A549 (cell line): ENCODE measurements at regions of chr15 and their contacts with region 1.

Region 1: GRCh38 chr15:65275728-65276126 is 11.0 kb downstream of the PARP16 start:
- DNase-seq: peak; percentile 74
- ATAC-seq: peak; percentile 75 to 78
- H3K4me3 ChIP-seq: no peak overlapping the region
- H3K27ac ChIP-seq: peak overlapping the region; percentile 59 to 76
- H3K4me1 ChIP-seq: peaks cover 20% of the 10 kb centered on the region
- CTCF ChIP-seq: no peak
- EP300 ChIP-seq: no peak
- POLR2A ChIP-seq: no peak
- RAD21 ChIP-seq: no peak

Region 2: DNA sequence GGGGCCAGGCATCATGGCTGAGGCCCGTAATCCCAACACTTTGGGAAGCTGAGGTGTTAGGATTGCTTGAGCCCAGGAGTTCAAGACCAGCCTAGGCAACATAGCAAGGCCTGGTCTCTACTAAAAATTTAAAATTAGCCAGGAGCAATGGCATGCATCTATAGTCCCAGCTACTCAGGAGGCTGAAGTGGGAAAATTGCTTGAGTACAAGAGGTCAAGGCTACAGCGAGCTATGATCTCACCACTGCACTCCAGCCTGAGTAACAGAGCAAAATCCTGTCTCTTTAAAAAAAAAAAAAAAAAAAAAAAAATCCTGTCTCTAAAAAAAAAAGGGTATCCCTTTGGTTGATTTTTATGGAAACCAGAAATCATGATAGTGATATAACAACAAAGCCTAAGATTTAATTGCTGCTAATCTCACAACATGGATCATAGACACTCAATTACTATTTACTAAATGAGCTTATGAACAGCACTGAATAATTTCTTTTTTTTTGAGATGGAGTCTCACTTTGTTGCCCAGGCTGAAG is 906.6 kb before region 1 on chr15:
- CTCF ChIA-PET with region 1: no interaction called
- POLR2A ChIA-PET with region 1: no interaction called
- DNase-seq: no peak
- ATAC-seq: no peak; a peak in 1 of 6 replicates
- H3K4me3 ChIP-seq: no peak overlapping the region
- H3K27ac ChIP-seq: no peak overlapping the region
- H3K4me1 ChIP-seq: no peaks in the 10 kb centered on the region
- CTCF ChIP-seq: no peak
- EP300 ChIP-seq: no peak
- POLR2A ChIP-seq: no peak
- RAD21 ChIP-seq: no peak

Region 3: DNA sequence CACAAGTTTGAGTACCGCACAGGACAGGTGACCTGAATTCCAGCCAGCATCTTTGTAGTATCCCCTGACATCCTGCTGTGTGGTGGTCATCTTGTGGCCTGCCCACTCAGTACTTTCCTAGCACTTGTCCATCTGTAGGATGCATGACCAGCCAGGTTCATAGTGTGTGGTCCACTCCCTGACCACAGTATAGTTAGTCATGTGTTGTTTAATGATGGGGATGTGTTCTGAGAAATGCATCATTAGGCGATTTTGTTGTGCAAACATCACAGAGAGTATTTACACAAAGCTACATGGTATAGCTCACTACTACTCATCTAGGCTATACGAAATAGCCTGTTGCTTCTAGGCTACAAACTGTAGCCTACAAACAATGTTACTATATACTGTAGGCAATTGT is 483.4 kb before region 1 on chr15:
- CTCF ChIA-PET with region 1: no interaction called
- POLR2A ChIA-PET with region 1: no interaction called
- DNase-seq: peak in 1 of 2 experiments; percentile 26
- ATAC-seq: peak; percentile 62 to 70; a peak in 5 of 6 replicates
- H3K4me3 ChIP-seq: no peak overlapping the region
- H3K27ac ChIP-seq: no peak overlapping the region
- H3K4me1 ChIP-seq: 0 out of 3 replicates have a peak, but pooled peaks cover 2% of the 10 kb centered on the region
- CTCF ChIP-seq: no peak
- EP300 ChIP-seq: no peak
- POLR2A ChIP-seq: no peak
- RAD21 ChIP-seq: no peak

Region 4: DNA sequence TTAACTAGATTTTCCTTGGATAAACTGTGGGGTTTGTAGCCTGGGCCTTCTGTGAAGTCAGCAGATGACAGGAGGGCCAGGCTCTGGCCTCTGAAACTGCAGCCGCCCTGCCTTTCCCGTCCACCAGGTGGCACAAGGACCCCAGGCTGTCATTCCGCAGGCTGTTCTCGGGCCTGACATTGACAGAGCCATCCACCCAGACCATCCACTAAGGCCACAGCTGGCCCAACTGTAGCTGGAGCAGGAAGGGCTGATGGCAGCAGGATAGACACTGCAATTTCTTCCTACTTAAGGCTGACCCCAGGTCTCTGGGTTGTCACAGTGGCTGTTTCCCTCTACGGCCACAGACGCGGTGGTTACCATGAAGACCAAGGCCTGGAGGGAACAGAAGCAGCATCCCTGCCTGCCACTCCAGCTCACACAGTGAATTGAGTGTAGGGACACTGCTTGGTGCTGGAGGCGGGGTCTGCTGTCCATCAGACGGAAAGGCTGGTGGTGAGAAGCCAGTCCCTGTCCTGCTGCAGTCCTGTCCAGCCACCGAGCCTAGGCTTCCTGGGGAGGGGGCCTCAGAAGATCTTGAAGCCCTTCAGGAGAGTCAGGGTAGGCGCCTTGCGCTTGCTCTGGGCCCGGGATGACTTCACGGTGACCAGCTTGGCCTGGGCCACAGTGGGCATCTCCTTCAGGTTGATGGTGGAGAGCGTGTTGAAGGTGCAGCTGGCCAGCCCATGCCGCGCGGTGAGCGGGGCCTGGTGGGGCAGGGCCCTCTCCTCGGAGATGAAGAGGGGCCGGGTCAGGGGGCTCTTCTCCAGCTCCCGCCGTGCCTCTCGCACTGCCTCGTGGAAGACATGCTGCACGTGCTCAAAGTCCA is 221.2 kb before region 1 on chr15:
- CTCF ChIA-PET with region 1: interaction called, 11 read pairs
- POLR2A ChIA-PET with region 1: no interaction called
- DNase-seq: peak; percentile 79 to 93
- ATAC-seq: peak; percentile 83 to 91
- H3K4me3 ChIP-seq: no peak overlapping the region
- H3K27ac ChIP-seq: peak overlapping the region; percentile 43 to 75
- H3K4me1 ChIP-seq: peaks cover 51% of the 10 kb centered on the region
- CTCF ChIP-seq: peak; percentile 94
- EP300 ChIP-seq: no peak
- POLR2A ChIP-seq: no peak
- RAD21 ChIP-seq: peak; percentile 95 to 98

Region 5: DNA sequence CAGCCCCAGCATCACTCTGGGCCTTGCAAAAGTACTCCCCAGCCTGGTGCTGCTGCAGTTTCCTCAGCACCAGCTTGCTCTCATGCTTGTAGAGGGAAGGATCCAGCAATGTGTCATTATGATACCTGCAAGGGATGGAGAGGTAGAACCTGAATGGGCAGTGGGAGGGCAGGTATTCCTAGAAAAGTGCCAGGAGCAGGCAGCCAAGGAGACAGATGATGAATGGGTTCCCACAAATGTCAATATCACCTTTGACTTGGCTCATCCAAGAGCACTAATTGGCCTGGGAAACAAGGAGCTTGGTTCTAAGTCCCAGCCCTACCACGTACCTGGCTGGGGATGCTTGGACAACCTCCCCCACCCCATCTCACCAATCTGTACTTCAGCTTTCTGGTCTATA is 73.8 kb before region 1 on chr15:
- CTCF ChIA-PET with region 1: interaction called, 408 read pairs
- POLR2A ChIA-PET with region 1: no interaction called
- DNase-seq: no peak
- ATAC-seq: no peak
- H3K4me3 ChIP-seq: no peak overlapping the region
- H3K27ac ChIP-seq: no peak overlapping the region
- H3K4me1 ChIP-seq: no peaks in the 10 kb centered on the region
- CTCF ChIP-seq: no peak
- EP300 ChIP-seq: no peak
- POLR2A ChIP-seq: no peak
- RAD21 ChIP-seq: no peak

Region 6: GRCh38 chr15:65217526-65218482 is 57.9 kb before region 1 on chr15:
- CTCF ChIA-PET with region 1: interaction called, 42 read pairs
- POLR2A ChIA-PET with region 1: no interaction called
- DNase-seq: no peak
- ATAC-seq: peak; percentile 5 to 27; a peak in 4 of 6 replicates
- H3K4me3 ChIP-seq: no peak overlapping the region
- H3K27ac ChIP-seq: no peak overlapping the region
- H3K4me1 ChIP-seq: 0 out of 3 replicates have a peak, but pooled peaks cover under 1% of the 10 kb centered on the region
- CTCF ChIP-seq: no peak
- EP300 ChIP-seq: no peak
- POLR2A ChIP-seq: no peak
- RAD21 ChIP-seq: no peak

Region 7: GRCh38 chr15:65245096-65245856 is 30.5 kb before region 1 on chr15:
- CTCF ChIA-PET with region 1: interaction called, 33 read pairs
- POLR2A ChIA-PET with region 1: no interaction called
- DNase-seq: no peak
- ATAC-seq: no peak
- H3K4me3 ChIP-seq: no peak overlapping the region
- H3K27ac ChIP-seq: no peak overlapping the region
- H3K4me1 ChIP-seq: peaks cover 3% of the 10 kb centered on the region; the same call in 1 of the 3 replicates
- CTCF ChIP-seq: no peak
- EP300 ChIP-seq: no peak
- POLR2A ChIP-seq: no peak
- RAD21 ChIP-seq: no peak

Region 8: DNA sequence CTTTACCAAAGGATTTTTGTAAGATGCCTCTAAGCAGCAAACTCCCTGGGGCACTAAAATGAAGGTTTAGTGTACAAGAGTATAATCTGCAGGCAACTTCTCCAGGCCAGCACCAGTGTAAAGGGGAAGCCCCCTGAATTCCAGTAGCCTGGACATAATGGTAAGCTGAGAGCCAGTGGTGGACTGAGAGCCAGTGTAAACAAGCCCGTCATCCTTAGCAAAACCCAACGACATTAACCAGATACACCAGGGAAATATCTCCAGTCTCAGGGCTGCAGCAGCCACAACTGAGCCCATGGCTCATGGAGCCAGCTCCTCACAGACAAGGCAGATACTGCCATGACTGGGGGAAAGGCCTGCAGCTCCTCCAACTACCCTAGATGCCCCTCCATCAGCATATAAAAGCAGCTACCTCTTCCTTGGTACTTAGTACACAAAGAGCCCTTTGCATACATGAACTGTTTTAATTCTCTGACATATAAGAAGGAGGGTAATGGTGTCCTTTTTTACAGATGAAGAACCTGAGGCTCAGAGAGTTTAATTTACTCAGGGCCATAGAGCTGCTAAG is 10.8 kb before region 1 on chr15:
- CTCF ChIA-PET with region 1: interaction called, 127 read pairs
- POLR2A ChIA-PET with region 1: no interaction called
- DNase-seq: no peak
- ATAC-seq: 0 out of 6 replicates have a peak, but pooled peaks of 1 of the 2 experiments have one; percentile 13
- H3K4me3 ChIP-seq: no peak overlapping the region
- H3K27ac ChIP-seq: no peak overlapping the region
- H3K4me1 ChIP-seq: no peaks in the 10 kb centered on the region
- CTCF ChIP-seq: no peak
- EP300 ChIP-seq: no peak
- POLR2A ChIP-seq: no peak
- RAD21 ChIP-seq: no peak

Region 9: GRCh38 chr15:65298731-65299130 is 23.0 kb after region 1 on chr15:
- CTCF ChIA-PET with region 1: interaction called, 25 read pairs
- POLR2A ChIA-PET with region 1: interaction called, 9 read pairs
- DNase-seq: no peak
- ATAC-seq: no peak
- H3K4me3 ChIP-seq: no peak overlapping the region
- H3K27ac ChIP-seq: no peak overlapping the region
- H3K4me1 ChIP-seq: peaks cover 23% of the 10 kb centered on the region
- CTCF ChIP-seq: no peak
- EP300 ChIP-seq: no peak
- POLR2A ChIP-seq: no peak
- RAD21 ChIP-seq: no peak

Region 10: DNA sequence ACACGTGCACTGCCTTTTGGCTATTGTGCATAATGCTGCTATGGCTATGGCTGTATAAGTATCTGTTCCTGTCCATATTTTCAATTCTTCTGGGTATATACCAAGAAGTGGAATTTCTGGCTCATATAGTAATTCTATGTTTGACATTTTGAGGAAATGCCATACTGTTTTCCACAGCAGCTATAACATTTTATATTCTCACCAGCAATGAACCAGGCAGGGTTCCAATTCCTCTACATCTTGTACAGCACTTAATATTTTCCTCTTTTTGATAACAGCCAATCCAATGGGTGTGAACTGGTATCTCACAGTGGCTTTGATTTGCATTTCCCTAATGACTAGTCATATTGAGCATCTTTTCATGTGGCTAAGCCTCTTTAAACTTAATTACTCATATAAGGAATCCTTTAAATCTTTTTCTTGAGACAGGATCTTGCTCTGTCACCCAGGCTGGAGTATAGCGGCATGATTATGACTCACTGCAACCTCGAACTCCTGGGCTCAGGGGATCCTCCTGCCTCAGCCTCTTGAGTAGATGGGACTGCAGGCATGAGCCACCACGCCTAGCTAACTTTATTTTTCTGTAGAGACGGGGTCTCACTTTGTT is 185.1 kb after region 1 on chr15:
- CTCF ChIA-PET with region 1: no interaction called
- POLR2A ChIA-PET with region 1: no interaction called
- DNase-seq: no peak
- ATAC-seq: no peak
- H3K4me3 ChIP-seq: no peak overlapping the region
- H3K27ac ChIP-seq: no peak overlapping the region
- H3K4me1 ChIP-seq: no peaks in the 10 kb centered on the region
- CTCF ChIP-seq: no peak
- EP300 ChIP-seq: no peak
- POLR2A ChIP-seq: no peak
- RAD21 ChIP-seq: no peak